ENCODE measurements at regions of chr15 and their contacts with region 1.

Region 1: GRCh38 chr15:96356494-96357455 is 26.3 kb downstream of the NR2F2 start:
- DNase-seq: peak; percentile 89
- H3K4me3 ChIP-seq: peak overlapping the region; percentile 58
- H3K27ac ChIP-seq: peak overlapping the region; percentile 20
- H3K4me1 ChIP-seq: peaks cover 4% of the 10 kb centered on the region
- H3K27me3 ChIP-seq: peaks cover 52% of the 10 kb centered on the region
- CTCF ChIP-seq: peak; percentile 99

Region 2: DNA sequence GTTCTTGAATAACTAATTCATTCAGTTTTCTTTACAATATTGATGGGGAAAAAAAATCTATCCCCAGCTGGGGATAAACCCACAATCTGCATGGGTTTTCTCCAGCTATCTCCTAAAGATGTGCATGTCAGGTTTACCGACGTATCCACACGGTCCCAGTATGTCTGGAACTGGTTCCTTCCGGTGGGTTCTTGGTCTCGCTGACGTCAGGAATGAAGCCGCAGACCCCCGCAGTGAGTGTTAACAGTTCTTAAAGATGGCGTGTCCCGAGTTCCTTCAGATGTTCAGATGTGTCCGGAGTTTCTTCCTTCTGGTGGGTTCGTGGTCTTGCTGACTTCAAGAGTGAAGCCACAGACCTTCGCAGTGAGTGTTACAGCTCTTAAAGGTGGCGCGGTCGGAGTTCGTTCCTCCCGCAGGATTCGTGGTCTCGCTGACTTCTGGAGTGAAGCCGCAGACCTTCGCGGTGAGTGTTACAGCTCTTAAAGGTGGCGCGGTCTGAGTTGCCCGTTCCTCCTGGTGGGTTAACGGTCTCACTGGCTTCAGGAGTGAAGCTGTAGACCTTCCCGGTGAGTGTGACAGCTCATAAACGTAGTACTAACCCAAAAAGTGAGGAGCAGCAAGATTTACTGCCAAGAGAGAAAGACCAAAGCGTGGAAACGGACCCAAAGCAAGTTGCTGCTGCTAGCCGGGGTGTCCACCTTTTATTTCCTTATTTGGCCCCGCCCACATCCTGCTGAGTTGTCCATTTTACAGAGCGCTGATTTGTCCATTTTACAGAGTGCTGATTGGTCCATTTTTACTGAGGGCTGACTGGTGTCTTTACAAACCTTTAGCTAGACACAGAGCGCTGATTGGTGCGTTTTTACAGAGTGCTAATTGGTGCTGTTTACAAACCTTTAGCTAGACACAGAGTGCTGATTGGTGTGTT is 221.3 kb before region 1 on chr15:
- intact Hi-C with region 1: no loop called
- DNase-seq: no peak
- H3K4me3 ChIP-seq: no peak overlapping the region
- H3K27ac ChIP-seq: no peak overlapping the region
- H3K4me1 ChIP-seq: no peaks in the 10 kb centered on the region
- H3K27me3 ChIP-seq: no peaks in the 10 kb centered on the region
- CTCF ChIP-seq: no peak

Region 3: DNA sequence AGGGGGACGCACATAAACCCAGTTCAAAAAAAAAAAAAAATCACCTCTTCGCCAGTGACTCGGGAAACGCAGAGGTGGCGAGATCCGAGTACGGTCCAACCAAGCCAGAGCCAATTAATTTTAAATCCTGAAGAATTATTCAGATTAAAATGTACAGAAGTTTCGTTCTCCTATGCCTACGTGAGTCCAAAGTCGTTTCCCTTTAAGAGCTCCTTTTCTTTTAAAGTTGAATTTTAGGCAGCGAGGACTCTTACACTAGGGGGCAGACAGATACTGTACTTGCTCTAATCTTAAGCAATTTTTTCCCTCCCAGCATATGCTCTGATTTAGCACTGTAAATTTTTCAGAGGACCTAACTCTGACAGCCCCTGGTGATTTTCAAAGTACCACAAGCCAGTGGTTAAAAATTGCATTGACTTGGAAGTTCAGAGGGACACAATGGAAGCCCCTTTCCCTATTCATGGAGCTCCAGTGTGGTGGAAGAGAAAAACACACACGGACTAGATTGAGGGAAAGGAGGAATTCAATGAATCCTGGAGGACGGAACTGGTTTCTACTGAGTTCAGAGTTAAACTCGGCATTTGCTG is 29.5 kb before region 1 on chr15:
- intact Hi-C with region 1: loop called (anchors 2 kb)
- DNase-seq: peak; percentile 51
- H3K4me3 ChIP-seq: peak overlapping the region; percentile 45
- H3K27ac ChIP-seq: peak overlapping the region; percentile 65
- H3K4me1 ChIP-seq: no peaks in the 10 kb centered on the region
- H3K27me3 ChIP-seq: peaks cover 36% of the 10 kb centered on the region
- CTCF ChIP-seq: peak; percentile 57

Region 4: DNA sequence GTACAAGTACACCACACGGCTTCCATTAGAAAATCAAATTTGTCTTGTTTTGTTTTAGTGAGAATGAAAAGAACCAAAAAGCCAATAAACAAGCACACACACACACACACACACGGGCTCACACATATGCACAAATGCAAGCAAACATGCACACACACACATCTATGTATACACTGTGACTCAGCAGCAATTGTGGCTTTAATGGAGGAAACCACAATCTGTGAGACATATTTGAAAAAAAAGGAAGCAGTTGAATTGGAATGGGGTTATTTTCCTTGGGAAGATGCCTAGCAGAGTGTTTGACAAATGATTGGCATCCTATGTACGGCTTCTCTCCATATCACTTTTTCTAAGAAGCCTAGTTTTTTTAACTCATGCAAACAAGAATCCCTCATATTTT is 1402.6 kb after region 1 on chr15:
- intact Hi-C with region 1: loop called (anchors 10 kb)
- DNase-seq: no peak
- H3K4me3 ChIP-seq: no peak overlapping the region
- H3K27ac ChIP-seq: no peak overlapping the region
- H3K4me1 ChIP-seq: no peaks in the 10 kb centered on the region
- H3K27me3 ChIP-seq: no peaks in the 10 kb centered on the region
- CTCF ChIP-seq: no peak

Measured in colonic mucosa (tissue), 4 donors.